CD4-positive, alpha-beta T cell (primary cell): ENCODE measurements at regions of chr5 and their contacts with region 1.

Region 1: DNA sequence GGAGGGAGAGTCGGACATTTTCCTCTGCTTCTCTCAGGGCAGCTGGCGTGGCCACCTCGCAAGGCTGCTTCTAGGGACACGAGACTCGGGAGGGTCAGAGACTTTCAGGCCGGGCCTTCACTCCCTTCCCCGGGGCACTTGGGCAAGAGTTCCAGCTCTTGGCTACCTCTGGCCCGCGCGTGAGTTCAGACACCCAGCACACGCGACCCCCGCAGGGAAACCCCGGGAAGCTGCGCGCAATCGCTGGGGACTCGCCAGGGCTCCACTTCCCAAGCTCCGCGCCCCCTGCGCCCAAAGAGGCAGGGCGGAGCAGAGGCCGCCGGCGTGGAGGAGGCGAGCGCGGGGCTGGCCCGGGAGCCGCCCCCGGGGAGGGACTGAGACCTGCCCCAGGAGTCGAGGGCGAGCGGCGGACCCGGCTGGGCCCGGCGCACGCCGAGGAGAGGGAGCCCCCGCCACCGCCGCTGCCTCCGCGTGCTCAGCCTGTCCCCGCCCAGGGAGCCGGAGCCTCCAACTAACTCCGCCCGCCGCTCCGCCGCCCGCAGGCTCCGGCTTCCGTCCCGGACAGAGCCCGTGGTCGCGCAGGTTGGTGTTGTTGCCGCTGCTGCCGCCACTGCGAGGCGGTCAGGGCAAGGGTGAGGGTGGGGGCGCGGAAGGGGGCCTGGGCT is at the start of gene PAM:
- DNase-seq: peak; percentile 42 to 85 (median 63)
- ATAC-seq: peak; percentile 70
- H3K4me3 ChIP-seq: peak within 1 kb of the TSS; percentile 96
- H3K4me3 Mint-ChIP-seq: peak within 1 kb of the TSS; percentile 96
- H3K27ac ChIP-seq: peak within 1 kb of the TSS; percentile 43 to 69
- H3K27ac Mint-ChIP-seq: peak within 1 kb of the TSS; percentile 79
- H3K4me1 ChIP-seq: peaks cover 22% of the 10 kb centered on the region
- H3K4me1 Mint-ChIP-seq: peaks cover 45% of the 10 kb centered on the region
- H3K27me3 ChIP-seq: no peaks in the 10 kb centered on the region
- H3K27me3 Mint-ChIP-seq: peaks cover 12% of the 10 kb centered on the region
- CTCF ChIP-seq: no peak
- total RNA-seq, gene PAM: 15.1 to 16.1 TPM

Region 2: GRCh38 chr5:102778478-102778877 is 23.6 kb after region 1 on chr5:
- CTCF ChIA-PET with region 1: interaction called, 13 read pairs
- POLR2A ChIA-PET with region 1: interaction called, 3 read pairs
- intact Hi-C with region 1: no loop called
- DNase-seq: no peak
- ATAC-seq: no peak
- H3K4me3 ChIP-seq: no peak overlapping the region
- H3K4me3 Mint-ChIP-seq: no peak overlapping the region
- H3K27ac ChIP-seq: no peak overlapping the region
- H3K27ac Mint-ChIP-seq: no peak overlapping the region
- H3K4me1 ChIP-seq: peaks cover 3% of the 10 kb centered on the region
- H3K4me1 Mint-ChIP-seq: peaks cover 32% of the 10 kb centered on the region
- H3K27me3 ChIP-seq: no peaks in the 10 kb centered on the region
- H3K27me3 Mint-ChIP-seq: no peaks in the 10 kb centered on the region
- CTCF ChIP-seq: no peak

Region 3: GRCh38 chr5:102801371-102801770 is 46.5 kb after region 1 on chr5:
- CTCF ChIA-PET with region 1: no interaction called
- POLR2A ChIA-PET with region 1: no interaction called
- intact Hi-C with region 1: loop called in 1 of 2 experiments (anchors 5 kb)
- DNase-seq: peak in 10 of 14 experiments; percentile 1 to 79 (median 8)
- ATAC-seq: peak; percentile 97
- H3K4me3 ChIP-seq: no peak overlapping the region
- H3K4me3 Mint-ChIP-seq: peak overlapping the region; percentile 26
- H3K27ac ChIP-seq: no peak overlapping the region
- H3K27ac Mint-ChIP-seq: no peak overlapping the region
- H3K4me1 ChIP-seq: peaks cover 8% of the 10 kb centered on the region
- H3K4me1 Mint-ChIP-seq: peaks cover 62% of the 10 kb centered on the region
- H3K27me3 ChIP-seq: no peaks in the 10 kb centered on the region
- H3K27me3 Mint-ChIP-seq: no peaks in the 10 kb centered on the region
- CTCF ChIP-seq: no peak

Region 4: GRCh38 chr5:103119765-103120606 is 365.1 kb after region 1 on chr5 and contains the starts of genes GIN1 and PPIP5K2:
- CTCF ChIA-PET with region 1: no interaction called
- POLR2A ChIA-PET with region 1: interaction called, 18 read pairs
- intact Hi-C with region 1: no loop called
- DNase-seq: peak; percentile 93 to 99 (median 97)
- ATAC-seq: peak; percentile 90
- H3K4me3 ChIP-seq: peak within 1 kb of the TSS; percentile 86
- H3K4me3 Mint-ChIP-seq: peak within 1 kb of the TSS; percentile 98
- H3K27ac ChIP-seq: peak within 1 kb of the TSS; percentile 92 to 98
- H3K27ac Mint-ChIP-seq: peak within 1 kb of the TSS; percentile 97
- H3K4me1 ChIP-seq: peaks cover 13% of the 10 kb centered on the region
- H3K4me1 Mint-ChIP-seq: peaks cover 65% of the 10 kb centered on the region
- H3K27me3 ChIP-seq: no peaks in the 10 kb centered on the region
- H3K27me3 Mint-ChIP-seq: no peaks in the 10 kb centered on the region
- CTCF ChIP-seq: no peak
- total RNA-seq, gene GIN1: 2.7 to 2.9 TPM
- total RNA-seq, gene PPIP5K2: 40.4 to 45.6 TPM